ENCODE measurements at regions of chr22 and their contacts with region 1.

Region 1: DNA sequence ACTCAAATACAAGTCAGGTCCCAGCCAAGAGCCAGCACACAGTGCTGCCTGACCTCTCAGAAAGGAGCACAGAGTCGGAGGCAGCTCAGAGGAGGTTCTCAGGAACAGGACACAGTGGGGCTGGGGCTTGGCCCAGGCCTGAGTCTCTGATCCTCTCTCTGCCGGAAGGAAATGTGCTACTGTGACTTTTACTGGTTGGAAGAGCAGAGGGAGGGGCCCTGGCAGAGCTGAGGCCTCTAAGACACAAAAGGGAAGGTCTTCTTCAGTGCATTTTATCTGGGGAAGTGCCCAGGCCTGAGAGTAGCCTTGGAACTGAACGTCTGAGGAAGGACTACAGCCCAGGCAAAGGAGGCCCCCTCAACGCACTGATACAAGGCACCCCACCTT is 16.2 kb upstream of the CASTOR1 start:
- DNase-seq: peak; percentile 81
- ATAC-seq: peak; percentile 79
- H3K4me3 Mint-ChIP-seq: peak overlapping the region; percentile 81
- H3K27ac Mint-ChIP-seq: peak overlapping the region; percentile 93
- H3K4me1 Mint-ChIP-seq: peaks cover 100% of the 10 kb centered on the region
- H3K27me3 Mint-ChIP-seq: no peaks in the 10 kb centered on the region

Region 2: GRCh38 chr22:30326706-30327362 is 21.3 kb after region 1 on chr22 and contains the start of gene TBC1D10A:
- CTCF ChIA-PET with region 1: interaction called, 14 read pairs
- POLR2A ChIA-PET with region 1: interaction called, 101 read pairs
- DNase-seq: peak; percentile 95
- ATAC-seq: peak; percentile 91
- H3K4me3 Mint-ChIP-seq: peak within 1 kb of the TSS; percentile 87
- H3K27ac Mint-ChIP-seq: peak within 1 kb of the TSS; percentile 76
- H3K4me1 Mint-ChIP-seq: peaks cover 47% of the 10 kb centered on the region
- H3K27me3 Mint-ChIP-seq: no peaks in the 10 kb centered on the region
- total RNA-seq, gene TBC1D10A: 47.6 to 49.2 TPM

Region 3: DNA sequence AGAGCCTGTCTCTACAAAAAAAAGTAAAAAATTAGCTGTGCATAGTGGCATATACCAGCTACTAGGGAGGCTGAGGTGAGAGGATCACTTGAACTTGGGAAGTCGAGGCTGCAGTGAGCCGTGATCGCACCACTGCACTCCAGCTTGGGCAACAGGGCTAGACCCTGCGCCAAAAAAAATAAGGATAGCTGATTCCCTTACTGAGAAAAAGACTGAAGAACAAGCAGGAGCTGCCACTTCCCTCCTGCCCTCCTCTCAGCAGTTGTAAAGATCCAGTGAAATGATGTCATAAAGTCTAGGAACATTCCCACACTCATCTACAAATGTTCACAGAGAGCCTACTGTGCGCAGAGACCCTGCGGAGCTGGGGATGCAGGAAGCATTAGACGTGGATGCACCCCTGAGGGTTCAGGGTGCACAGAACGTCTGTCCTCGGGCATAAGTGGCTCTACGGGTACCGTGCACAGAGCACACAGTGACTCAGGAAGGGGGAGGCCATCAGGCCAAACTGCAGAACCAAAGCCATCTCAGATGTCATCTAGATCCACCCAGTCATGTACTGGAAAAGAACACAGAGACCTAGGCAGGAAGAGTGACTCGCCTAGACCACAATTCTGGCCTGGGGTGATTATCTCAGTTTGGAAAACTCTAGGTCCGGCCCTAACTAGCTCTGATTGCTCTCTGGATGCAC is 103.0 kb after region 1 on chr22:
- CTCF ChIA-PET with region 1: no interaction called
- POLR2A ChIA-PET with region 1: no interaction called
- DNase-seq: no peak
- ATAC-seq: no peak
- H3K4me3 Mint-ChIP-seq: no peak overlapping the region
- H3K27ac Mint-ChIP-seq: no peak overlapping the region
- H3K4me1 Mint-ChIP-seq: peaks cover 8% of the 10 kb centered on the region
- H3K27me3 Mint-ChIP-seq: no peaks in the 10 kb centered on the region

Measured in activated CD8-positive, alpha-beta T cell treated with anti-CD3 and anti-CD28 coated beads, Interleukin-2, amount 10 ng/mL, durations not matched to agents 7 days and 5 days (primary cell).